ENCODE measurements at regions of chr17 and their contacts with region 1.

Region 1: GRCh38 chr17:29219378-29220047 is 27.1 kb upstream of the CRYBA1 start:
- DNase-seq: peak; percentile 81
- ATAC-seq: peak; percentile 95
- H3K4me3 Mint-ChIP-seq: no peak overlapping the region
- H3K27ac Mint-ChIP-seq: no peak overlapping the region
- H3K4me1 Mint-ChIP-seq: peaks cover 9% of the 10 kb centered on the region
- H3K27me3 Mint-ChIP-seq: peaks cover 2% of the 10 kb centered on the region

Region 2: GRCh38 chr17:29133146-29133713 is 86.3 kb before region 1 on chr17:
- CTCF ChIA-PET with region 1: interaction called, 20 read pairs
- POLR2A ChIA-PET with region 1: no interaction called
- DNase-seq: no peak
- ATAC-seq: peak; percentile 15
- H3K4me3 Mint-ChIP-seq: no peak overlapping the region
- H3K27ac Mint-ChIP-seq: peak overlapping the region; percentile 20
- H3K4me1 Mint-ChIP-seq: peaks cover 52% of the 10 kb centered on the region
- H3K27me3 Mint-ChIP-seq: no peaks in the 10 kb centered on the region

Region 3: GRCh38 chr17:29155227-29155965 is 64.1 kb before region 1 on chr17:
- CTCF ChIA-PET with region 1: interaction called, 266 read pairs
- POLR2A ChIA-PET with region 1: no interaction called
- DNase-seq: peak; percentile 74
- ATAC-seq: peak; percentile 91
- H3K4me3 Mint-ChIP-seq: peak overlapping the region; percentile 20
- H3K27ac Mint-ChIP-seq: peak overlapping the region; percentile 84
- H3K4me1 Mint-ChIP-seq: peaks cover 55% of the 10 kb centered on the region
- H3K27me3 Mint-ChIP-seq: no peaks in the 10 kb centered on the region

Region 4: DNA sequence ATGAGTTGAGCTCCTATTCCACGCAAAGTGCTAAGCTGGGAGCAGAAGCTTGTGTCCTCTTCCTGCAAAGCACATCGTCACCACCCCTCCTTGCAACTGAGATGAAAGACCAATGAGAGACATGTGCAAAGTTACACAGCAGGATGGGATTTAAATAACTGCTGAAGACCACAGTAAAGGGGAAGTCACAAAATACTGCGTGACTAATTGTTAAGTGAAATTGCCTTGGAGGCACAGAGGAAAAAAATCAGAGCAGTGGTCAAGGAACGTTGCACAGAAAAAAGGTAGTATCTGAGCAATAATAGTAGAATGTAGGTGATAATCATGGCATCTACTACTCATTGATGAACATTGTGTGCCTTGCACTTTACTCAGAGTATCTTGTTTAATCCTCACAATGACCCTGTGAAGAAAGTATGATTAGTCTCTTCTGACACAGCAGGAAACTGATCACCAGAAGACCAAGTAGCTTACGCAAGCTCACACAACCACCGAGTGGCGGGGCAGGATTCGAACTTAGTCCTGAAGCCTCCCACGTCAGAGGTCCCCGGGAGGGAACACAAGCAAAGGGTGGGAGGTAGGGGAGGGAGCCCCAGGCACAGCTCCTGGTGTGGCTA is 23.9 kb before region 1 on chr17:
- CTCF ChIA-PET with region 1: interaction called, 12 read pairs
- POLR2A ChIA-PET with region 1: no interaction called
- DNase-seq: no peak
- ATAC-seq: no peak
- H3K4me3 Mint-ChIP-seq: no peak overlapping the region
- H3K27ac Mint-ChIP-seq: no peak overlapping the region
- H3K4me1 Mint-ChIP-seq: peaks cover 11% of the 10 kb centered on the region
- H3K27me3 Mint-ChIP-seq: peaks cover 23% of the 10 kb centered on the region

Region 5: GRCh38 chr17:29252101-29252866 is 32.8 kb after region 1 on chr17:
- CTCF ChIA-PET with region 1: interaction called, 12 read pairs
- POLR2A ChIA-PET with region 1: no interaction called
- DNase-seq: no peak
- ATAC-seq: no peak
- H3K4me3 Mint-ChIP-seq: no peak overlapping the region
- H3K27ac Mint-ChIP-seq: no peak overlapping the region
- H3K4me1 Mint-ChIP-seq: peaks cover 4% of the 10 kb centered on the region
- H3K27me3 Mint-ChIP-seq: no peaks in the 10 kb centered on the region